OCI-LY7 (cell line): ENCODE measurements at regions of chr2 and their contacts with region 1.

Region 1: GRCh38 chr2:141676139-141676538 is 454.7 kb downstream of the LRP1B start:
- DNase-seq: no peak
- H3K4me3 ChIP-seq: no peak overlapping the region
- H3K27ac ChIP-seq: no peak overlapping the region
- H3K4me1 ChIP-seq: no peaks in the 10 kb centered on the region
- CTCF ChIP-seq: no peak

Region 2: DNA sequence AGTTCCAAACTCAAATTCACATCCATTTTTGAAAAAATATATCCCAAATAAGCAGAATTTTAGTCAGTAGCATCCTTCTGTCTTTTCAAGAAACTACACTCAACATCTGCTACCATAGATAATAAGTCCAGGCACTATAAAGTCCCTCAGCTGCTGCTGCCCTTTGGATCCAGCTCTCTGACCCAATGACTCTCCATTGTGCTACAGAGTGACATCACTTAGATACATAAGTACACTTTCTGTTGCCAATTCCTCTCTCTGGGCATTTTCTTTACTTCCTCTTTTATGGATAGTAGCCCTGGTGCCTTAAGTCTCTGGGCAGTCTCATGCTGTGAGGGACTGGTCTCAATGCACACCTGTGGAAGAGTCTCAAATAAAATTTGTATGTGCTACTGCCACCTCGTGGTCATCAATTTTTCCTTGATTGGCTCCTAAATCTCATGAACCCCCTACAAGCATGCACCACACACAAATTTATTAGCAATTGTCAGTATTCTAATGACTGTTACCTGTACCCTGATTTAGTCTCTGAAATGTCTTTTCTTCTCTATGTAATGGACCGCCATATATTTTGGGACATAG is 235.4 kb after region 1 on chr2:
- CTCF ChIA-PET with region 1: no interaction called
- POLR2A ChIA-PET with region 1: interaction called, 10 read pairs
- intact Hi-C with region 1: no loop called
- DNase-seq: peak; percentile 41
- H3K4me3 ChIP-seq: no peak overlapping the region
- H3K27ac ChIP-seq: no peak overlapping the region
- H3K4me1 ChIP-seq: no peaks in the 10 kb centered on the region
- CTCF ChIP-seq: peak; percentile 73